Activated T-helper 2 cell treated with anti-CD3 and anti-CD28 coated beads, Interferon-gamma antibody, Interleukin-2, Interleukin-4, amounts not matched to agents 10 μg/mL and 5 μg/mL and 100 μg/mL, durations not matched to agents 14 hours and 24 hours and 36 hours (primary cell): ENCODE measurements at regions of chr10 and their contacts with region 1.

Region 1: DNA sequence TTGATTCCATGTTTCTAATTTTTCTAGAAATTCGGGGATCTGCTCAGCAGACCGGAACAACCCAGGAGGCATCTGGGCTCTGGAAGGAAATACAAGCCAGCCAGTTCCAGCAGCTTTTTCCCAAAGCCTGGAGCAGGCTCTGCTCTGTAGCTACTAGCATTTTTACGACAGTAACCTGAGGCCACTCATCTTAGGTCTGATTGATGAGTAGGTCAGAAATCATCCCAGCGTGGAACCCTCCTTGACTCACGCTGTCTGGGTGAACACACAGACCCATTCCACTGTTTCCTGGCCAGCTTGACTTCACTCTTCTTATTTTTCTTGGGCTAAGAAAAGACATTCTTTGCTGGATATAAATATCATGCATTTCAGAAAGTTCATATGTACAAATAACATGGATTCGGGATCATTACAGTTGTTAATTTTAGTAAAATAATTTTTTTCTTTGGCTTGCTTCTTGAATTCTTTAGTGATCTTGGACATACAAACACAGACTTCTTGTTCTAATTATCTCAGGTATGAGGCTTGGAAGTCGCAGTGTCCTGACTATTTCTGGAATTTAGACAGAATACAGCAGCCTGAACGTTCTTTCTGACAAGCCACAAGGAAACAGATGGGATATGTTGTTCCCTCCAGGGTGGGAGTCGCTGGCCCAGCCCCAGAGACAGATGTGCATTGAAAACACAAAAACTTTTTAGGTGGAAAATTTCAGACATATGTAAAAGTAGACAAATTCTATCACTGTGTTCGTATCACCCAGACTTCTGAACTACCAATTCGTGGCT is 54.6 kb upstream of the PITRM1 start:
- DNase-seq: no peak
- H3K4me3 Mint-ChIP-seq: no peak overlapping the region
- H3K27ac Mint-ChIP-seq: no peak overlapping the region
- H3K4me1 Mint-ChIP-seq: peaks cover 15% of the 10 kb centered on the region
- H3K27me3 Mint-ChIP-seq: peaks cover 26% of the 10 kb centered on the region

Region 2: DNA sequence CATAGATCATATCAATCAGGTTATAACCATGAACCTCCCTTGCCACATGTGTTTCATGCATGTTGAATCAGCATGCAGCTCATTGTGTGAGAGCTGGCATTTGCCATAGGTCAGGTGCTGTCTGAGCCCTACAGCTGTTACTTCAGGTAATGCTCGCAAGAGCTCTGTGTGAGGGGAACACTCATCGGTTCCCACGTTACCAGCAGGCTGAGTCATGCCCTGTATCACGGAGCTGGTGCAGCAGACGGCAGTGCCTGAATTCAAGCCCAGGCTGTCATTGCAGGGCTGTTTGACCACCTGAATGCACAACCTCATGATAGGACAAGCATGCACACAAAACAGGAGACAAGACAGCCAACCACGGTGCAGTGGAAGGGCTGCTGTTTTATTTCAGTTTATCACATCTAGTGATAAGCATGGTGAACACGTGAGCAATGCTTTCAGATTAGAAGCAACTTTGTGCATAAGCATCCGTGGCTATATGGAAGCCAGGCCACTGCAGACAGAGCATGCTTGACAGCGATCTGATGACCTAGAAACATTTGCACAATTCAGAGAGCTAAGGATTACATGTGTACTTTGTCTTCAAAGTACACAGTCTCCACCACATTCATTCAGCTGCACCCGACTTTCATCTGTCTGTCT is 216.2 kb before region 1 on chr10:
- intact Hi-C with region 1: no loop called
- DNase-seq: no peak
- H3K4me3 Mint-ChIP-seq: no peak overlapping the region
- H3K27ac Mint-ChIP-seq: no peak overlapping the region
- H3K4me1 Mint-ChIP-seq: peaks cover 2% of the 10 kb centered on the region
- H3K27me3 Mint-ChIP-seq: peaks cover 38% of the 10 kb centered on the region

Region 3: GRCh38 chr10:3090914-3091787 is 136.0 kb before region 1 on chr10:
- intact Hi-C with region 1: no loop called
- DNase-seq: no peak
- H3K4me3 Mint-ChIP-seq: peak overlapping the region; percentile 26
- H3K27ac Mint-ChIP-seq: peak overlapping the region; percentile 88
- H3K4me1 Mint-ChIP-seq: peaks cover 64% of the 10 kb centered on the region
- H3K27me3 Mint-ChIP-seq: no peaks in the 10 kb centered on the region

Region 4: DNA sequence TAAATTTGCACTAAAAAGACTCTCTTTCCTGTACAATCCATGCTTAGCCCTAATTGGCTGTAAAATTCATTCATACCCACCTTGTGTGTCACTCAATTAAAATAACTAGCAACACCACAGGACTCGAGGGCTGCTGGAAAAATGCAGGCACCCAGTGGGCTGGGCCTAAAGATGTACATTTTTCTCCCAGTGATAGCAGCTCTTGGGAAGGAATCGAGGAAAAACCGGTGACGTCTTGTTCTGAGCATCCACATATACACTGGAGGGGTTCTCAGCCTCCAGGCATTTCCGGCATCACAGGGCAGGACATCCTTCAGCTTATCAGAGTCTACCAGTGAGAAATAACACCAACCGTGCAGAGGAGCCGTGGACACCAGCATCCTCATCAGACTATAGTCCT is 31.2 kb after region 1 on chr10:
- intact Hi-C with region 1: no loop called
- DNase-seq: no peak
- H3K4me3 Mint-ChIP-seq: no peak overlapping the region
- H3K27ac Mint-ChIP-seq: no peak overlapping the region
- H3K4me1 Mint-ChIP-seq: no peaks in the 10 kb centered on the region
- H3K27me3 Mint-ChIP-seq: peaks cover 35% of the 10 kb centered on the region

Region 5: GRCh38 chr10:3948843-3949242 is 721.7 kb after region 1 on chr10:
- intact Hi-C with region 1: loop called (anchors 5 kb)
- DNase-seq: peak; percentile 71
- H3K4me3 Mint-ChIP-seq: peak overlapping the region; percentile 45
- H3K27ac Mint-ChIP-seq: peak overlapping the region; percentile 79
- H3K4me1 Mint-ChIP-seq: peaks cover 50% of the 10 kb centered on the region
- H3K27me3 Mint-ChIP-seq: no peaks in the 10 kb centered on the region

Region 6: DNA sequence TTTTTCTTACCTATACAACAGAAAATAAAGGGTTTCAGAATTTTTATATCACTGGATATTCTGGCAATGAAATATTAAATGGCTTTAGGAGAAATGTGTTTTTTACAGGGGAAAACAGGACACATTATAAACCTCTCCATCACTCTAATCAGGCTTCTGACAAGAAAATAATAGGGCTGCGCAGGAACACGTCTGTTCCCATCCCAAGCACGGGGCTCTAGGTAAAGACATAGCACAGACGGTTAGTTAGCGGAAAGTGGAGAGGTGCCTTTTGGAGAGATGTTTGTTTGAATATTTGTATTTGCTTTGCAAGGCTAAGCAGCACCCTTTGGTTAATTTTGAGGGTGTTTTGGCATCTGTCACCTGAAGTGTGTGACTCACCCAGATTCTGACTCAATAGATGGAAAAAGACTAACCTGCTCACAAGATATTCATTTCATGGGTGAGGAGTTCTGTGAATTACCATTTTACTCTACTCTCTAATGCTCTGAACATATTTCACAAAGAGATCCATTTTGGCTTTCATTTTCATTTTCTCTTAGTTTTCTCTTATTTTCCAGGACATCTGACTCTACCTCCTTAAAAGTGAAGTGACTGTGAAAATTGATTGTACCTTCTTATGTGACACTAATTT is 1424.4 kb after region 1 on chr10:
- intact Hi-C with region 1: loop called (anchors 1 kb)
- DNase-seq: no peak
- H3K4me3 Mint-ChIP-seq: no peak overlapping the region
- H3K27ac Mint-ChIP-seq: peak overlapping the region; percentile 83
- H3K4me1 Mint-ChIP-seq: peaks cover 25% of the 10 kb centered on the region
- H3K27me3 Mint-ChIP-seq: peaks cover 12% of the 10 kb centered on the region

Region 7: GRCh38 chr10:4775808-4776207 is 1548.7 kb after region 1 on chr10:
- intact Hi-C with region 1: loop called (anchors 5 kb)
- DNase-seq: no peak
- H3K4me3 Mint-ChIP-seq: no peak overlapping the region
- H3K27ac Mint-ChIP-seq: peak overlapping the region; percentile 67
- H3K4me1 Mint-ChIP-seq: peaks cover 6% of the 10 kb centered on the region
- H3K27me3 Mint-ChIP-seq: peaks cover 23% of the 10 kb centered on the region